ENCODE measurements at regions of chr12 and their contacts with region 1.

Region 1: GRCh38 chr12:27014085-27014858 is at the start of gene TM7SF3:
- DNase-seq: peak; percentile 93 to 96 (median 95)
- H3K4me3 ChIP-seq: peak within 1 kb of the TSS; percentile 76
- H3K27ac ChIP-seq: peak within 1 kb of the TSS; percentile 85 to 86
- H3K4me1 ChIP-seq: peaks cover 9% of the 10 kb centered on the region
- H3K27me3 ChIP-seq: no peaks in the 10 kb centered on the region
- CTCF ChIP-seq: peak; percentile 94 to 96 (median 96)
- EP300 ChIP-seq: no peak
- POLR2A ChIP-seq: peak; percentile 44
- total RNA-seq, gene TM7SF3: 35.2 to 63.8 (median 44.2) TPM

Region 2: GRCh38 chr12:26126340-26127284 is 887.7 kb before region 1 on chr12:
- intact Hi-C with region 1: loop called in 1 of 4 experiments (anchors 10 kb)
- DNase-seq: peak; percentile 82 to 85 (median 84)
- H3K4me3 ChIP-seq: peak overlapping the region; percentile 48
- H3K27ac ChIP-seq: peak overlapping the region; percentile 52 to 94
- H3K4me1 ChIP-seq: peaks cover 5% of the 10 kb centered on the region
- H3K27me3 ChIP-seq: no peaks in the 10 kb centered on the region
- CTCF ChIP-seq: no peak
- EP300 ChIP-seq: no peak
- POLR2A ChIP-seq: peak; percentile 13

Region 3: GRCh38 chr12:26853303-26854030 is 160.8 kb before region 1 on chr12:
- intact Hi-C with region 1: loop called in 1 of 4 experiments (anchors 5 kb)
- DNase-seq: peak; percentile 33 to 66 (median 58)
- H3K4me3 ChIP-seq: no peak overlapping the region
- H3K27ac ChIP-seq: no peak overlapping the region
- H3K4me1 ChIP-seq: no peaks in the 10 kb centered on the region
- H3K27me3 ChIP-seq: no peaks in the 10 kb centered on the region
- CTCF ChIP-seq: peak; percentile 38 to 75 (median 74)
- EP300 ChIP-seq: no peak
- POLR2A ChIP-seq: no peak

Region 4: GRCh38 chr12:26937875-26938700 is 76.2 kb before region 1 on chr12 and contains the starts of genes FGFR1OP2 and INTS13:
- intact Hi-C with region 1: loop called in 2 of 4 experiments (anchors 5 to 10 kb)
- DNase-seq: peak; percentile 99 to 100 (median 99)
- H3K4me3 ChIP-seq: peak within 1 kb of the TSS; percentile 98
- H3K27ac ChIP-seq: peak within 1 kb of the TSS; percentile 93 to 96
- H3K4me1 ChIP-seq: peaks cover 4% of the 10 kb centered on the region
- H3K27me3 ChIP-seq: no peaks in the 10 kb centered on the region
- CTCF ChIP-seq: no peak
- EP300 ChIP-seq: no peak
- POLR2A ChIP-seq: peak; percentile 97
- total RNA-seq, gene FGFR1OP2: 67.8 to 150 (median 80.4) TPM
- total RNA-seq, gene INTS13: 11.1 to 18.1 (median 16.3) TPM

Region 5: DNA sequence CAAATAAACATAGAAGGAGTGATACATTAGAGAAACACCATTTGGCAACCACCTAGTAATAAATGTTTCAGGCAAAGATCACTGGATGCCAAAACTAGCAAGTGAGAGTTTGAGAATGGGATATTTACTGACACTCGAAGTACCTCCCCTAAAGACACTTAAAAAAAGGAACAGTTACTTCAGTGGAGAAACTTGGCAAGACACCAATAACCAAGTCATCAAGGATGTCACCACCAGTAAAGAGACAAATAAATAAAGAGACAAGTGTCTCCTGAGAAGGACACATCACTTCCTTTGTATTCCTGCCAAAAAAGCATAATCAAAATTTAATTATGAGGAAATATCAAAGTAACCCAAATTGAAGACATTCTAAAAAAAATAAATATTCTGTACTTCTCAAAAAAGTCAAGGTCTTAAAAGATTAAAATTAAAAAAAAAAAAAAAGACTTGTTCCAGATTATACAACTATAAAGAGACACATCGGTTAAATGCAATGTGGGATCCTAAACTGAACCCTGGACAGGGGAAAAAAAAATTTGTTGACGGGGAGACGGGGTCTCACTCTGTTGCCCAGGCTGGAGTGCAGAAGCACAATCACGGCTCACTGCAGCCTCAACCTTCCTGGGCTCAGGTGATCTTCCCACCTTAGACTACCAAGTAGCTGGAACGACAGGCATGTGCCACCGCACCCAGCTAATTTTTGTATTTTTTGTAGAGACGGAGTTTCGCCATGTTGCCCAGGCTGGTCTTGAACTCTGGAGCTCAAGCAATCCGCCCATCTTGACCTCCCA is 26.4 kb before region 1 on chr12:
- intact Hi-C with region 1: loop called in 1 of 4 experiments (anchors 1 kb)
- DNase-seq: no peak
- H3K4me3 ChIP-seq: no peak overlapping the region
- H3K27ac ChIP-seq: no peak overlapping the region
- H3K4me1 ChIP-seq: no peaks in the 10 kb centered on the region
- H3K27me3 ChIP-seq: no peaks in the 10 kb centered on the region
- CTCF ChIP-seq: no peak
- EP300 ChIP-seq: no peak
- POLR2A ChIP-seq: no peak

Region 6: GRCh38 chr12:27243804-27244683 is 229.8 kb after region 1 on chr12 and contains the start of gene STK38L:
- intact Hi-C with region 1: loop called in 1 of 4 experiments (anchors 10 kb)
- DNase-seq: peak; percentile 95 to 98 (median 97)
- H3K4me3 ChIP-seq: peak within 1 kb of the TSS; percentile 86
- H3K27ac ChIP-seq: peak within 1 kb of the TSS in 1 of 2 donors; percentile 69
- H3K4me1 ChIP-seq: peaks cover 3% of the 10 kb centered on the region
- H3K27me3 ChIP-seq: no peaks in the 10 kb centered on the region
- CTCF ChIP-seq: no peak
- EP300 ChIP-seq: no peak
- POLR2A ChIP-seq: peak; percentile 84
- total RNA-seq, gene STK38L: 13.4 to 23.6 (median 16.8) TPM

Region 7: DNA sequence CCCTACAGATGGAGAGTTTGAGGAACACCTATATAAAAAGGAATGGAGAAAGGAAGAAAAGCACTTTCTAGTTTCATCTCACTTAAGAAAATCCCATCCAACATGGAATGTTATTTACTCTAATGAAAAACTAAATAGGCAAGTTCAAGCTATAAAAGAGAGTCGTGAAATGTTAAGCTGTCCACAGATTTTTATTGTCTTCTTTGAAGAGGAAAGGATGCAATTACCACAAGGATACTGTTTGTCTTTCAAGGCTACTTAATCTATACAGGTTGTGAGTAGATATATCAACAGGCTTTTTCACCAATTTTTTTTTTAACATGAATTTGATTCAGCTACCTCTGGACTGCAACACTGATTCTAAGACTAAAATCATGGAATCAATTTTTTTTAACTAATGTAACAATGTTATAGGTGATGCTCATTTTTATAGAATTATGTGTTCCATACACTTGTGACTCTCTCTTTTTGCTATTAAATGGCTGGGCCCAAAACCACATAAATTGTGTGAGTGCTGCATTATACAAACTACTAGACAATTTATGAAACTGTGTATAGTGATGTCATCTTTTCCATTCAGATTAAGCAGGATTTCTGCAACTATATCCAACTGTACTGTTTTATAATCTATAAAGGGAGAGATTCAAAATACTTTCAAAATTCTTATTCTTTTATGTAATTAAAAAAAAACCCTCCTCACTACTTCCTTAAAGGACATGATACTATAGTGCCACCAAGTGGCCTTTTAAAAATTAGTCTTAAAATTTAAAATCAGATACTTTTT is 291.6 kb after region 1 on chr12:
- intact Hi-C with region 1: loop called in 1 of 4 experiments (anchors 10 kb)
- DNase-seq: no peak
- H3K4me3 ChIP-seq: no peak overlapping the region
- H3K27ac ChIP-seq: no peak overlapping the region
- H3K4me1 ChIP-seq: no peaks in the 10 kb centered on the region
- H3K27me3 ChIP-seq: no peaks in the 10 kb centered on the region
- CTCF ChIP-seq: peak in 2 of 3 donors; percentile 27 to 55
- EP300 ChIP-seq: no peak
- POLR2A ChIP-seq: no peak

Region 8: GRCh38 chr12:27480016-27480415 is 465.7 kb after region 1 on chr12:
- intact Hi-C with region 1: no loop called
- DNase-seq: no peak
- H3K4me3 ChIP-seq: no peak overlapping the region
- H3K27ac ChIP-seq: no peak overlapping the region
- H3K4me1 ChIP-seq: no peaks in the 10 kb centered on the region
- H3K27me3 ChIP-seq: no peaks in the 10 kb centered on the region
- CTCF ChIP-seq: no peak
- EP300 ChIP-seq: no peak
- POLR2A ChIP-seq: no peak

Measured in ovary (tissue), 10 donors.